Gastrocnemius medialis (tissue), 4 donors: ENCODE measurements at regions of chr7 and their contacts with region 1.

Region 1: GRCh38 chr7:137898839-137899721 is 52.3 kb upstream of the DGKI start:
- DNase-seq: peak; percentile 69 to 79
- ATAC-seq: peak; percentile 83 to 90
- H3K4me3 ChIP-seq: peak overlapping the region in 3 of 4 donors; percentile 15 to 39 (median 17)
- H3K27ac ChIP-seq: peak overlapping the region; percentile 28 to 55 (median 40)
- H3K4me1 ChIP-seq: peaks cover 19 to 23% of the 10 kb centered on the region in 2 donors
- H3K27me3 ChIP-seq: no peaks in the 10 kb centered on the region
- CTCF ChIP-seq: peak; percentile 89 to 99 (median 93)
- POLR2A ChIP-seq: no peak

Region 2: DNA sequence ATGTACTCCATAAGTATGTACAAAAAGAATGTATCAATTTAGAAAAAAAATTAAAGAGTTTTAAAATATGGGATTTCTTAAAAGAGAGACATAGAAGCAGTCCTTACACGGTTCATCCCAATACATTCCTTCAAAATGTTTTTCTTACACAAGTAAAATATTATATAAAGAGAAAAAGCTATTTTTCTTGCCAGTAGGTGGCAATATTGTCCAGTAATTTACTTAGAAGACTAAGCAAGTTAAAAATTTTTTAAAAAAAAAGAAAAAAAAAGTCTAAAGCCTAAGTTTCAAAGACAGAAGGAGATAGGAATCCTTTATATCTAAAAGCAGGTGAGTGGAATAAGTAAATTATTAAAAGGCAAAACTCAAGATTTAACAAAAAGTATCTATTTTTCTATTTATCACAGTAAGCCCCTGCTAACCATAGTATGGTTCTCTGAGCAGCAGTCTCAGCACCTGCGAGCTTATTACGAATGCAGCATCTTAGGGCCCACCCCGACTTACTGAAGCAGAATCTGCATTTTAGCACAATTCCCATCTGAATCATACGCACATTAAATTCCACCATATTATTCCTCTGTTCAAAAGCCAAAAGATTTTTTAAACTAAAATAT is 292.9 kb before region 1 on chr7:
- in situ Hi-C with region 1: no loop called
- intact Hi-C with region 1: loop called (anchors 5 kb)
- DNase-seq: no peak
- ATAC-seq: no peak
- H3K4me3 ChIP-seq: no peak overlapping the region
- H3K27ac ChIP-seq: no peak overlapping the region
- H3K4me1 ChIP-seq: no peaks in the 10 kb centered on the region
- H3K27me3 ChIP-seq: no peaks in the 10 kb centered on the region
- CTCF ChIP-seq: peak in 3 of 5 experiments; percentile 7 to 52 (median 37)
- POLR2A ChIP-seq: no peak

Region 3: DNA sequence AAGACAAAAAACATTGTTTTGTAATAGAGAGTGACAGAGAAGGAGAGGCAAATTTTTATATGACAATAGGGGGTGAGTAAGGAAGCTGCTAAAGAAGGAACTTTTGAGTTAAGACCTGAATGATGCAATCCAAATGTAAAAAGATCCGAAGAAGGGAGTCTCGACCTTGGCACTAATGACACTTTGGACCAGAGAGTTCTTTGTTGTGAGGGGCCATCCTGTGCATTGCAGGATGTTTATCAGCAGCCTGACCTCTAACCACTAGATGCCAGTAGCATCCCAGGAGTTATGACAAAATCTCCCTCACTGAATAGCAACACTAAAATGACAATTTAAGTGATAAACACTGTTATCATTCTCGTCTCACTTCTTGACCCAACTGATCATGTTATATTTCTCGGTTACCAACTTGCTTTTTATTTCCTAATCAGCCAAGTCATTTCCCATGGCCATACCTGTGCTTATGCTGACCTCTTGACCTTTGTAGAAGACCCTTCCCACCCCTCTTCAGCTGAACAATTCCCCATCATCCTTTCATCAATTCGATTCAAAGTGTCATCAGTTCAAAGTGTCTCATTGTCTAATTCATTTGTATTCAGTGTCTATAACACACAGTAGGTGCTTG is 82.3 kb before region 1 on chr7:
- in situ Hi-C with region 1: no loop called
- intact Hi-C with region 1: loop called (anchors 1 kb)
- DNase-seq: no peak
- ATAC-seq: peak in 1 of 2 donors; percentile 27
- H3K4me3 ChIP-seq: no peak overlapping the region
- H3K27ac ChIP-seq: no peak overlapping the region
- H3K4me1 ChIP-seq: no peaks in the 10 kb centered on the region
- H3K27me3 ChIP-seq: no peaks in the 10 kb centered on the region
- CTCF ChIP-seq: peak in 1 of 5 experiments; percentile 10
- POLR2A ChIP-seq: no peak

Region 4: DNA sequence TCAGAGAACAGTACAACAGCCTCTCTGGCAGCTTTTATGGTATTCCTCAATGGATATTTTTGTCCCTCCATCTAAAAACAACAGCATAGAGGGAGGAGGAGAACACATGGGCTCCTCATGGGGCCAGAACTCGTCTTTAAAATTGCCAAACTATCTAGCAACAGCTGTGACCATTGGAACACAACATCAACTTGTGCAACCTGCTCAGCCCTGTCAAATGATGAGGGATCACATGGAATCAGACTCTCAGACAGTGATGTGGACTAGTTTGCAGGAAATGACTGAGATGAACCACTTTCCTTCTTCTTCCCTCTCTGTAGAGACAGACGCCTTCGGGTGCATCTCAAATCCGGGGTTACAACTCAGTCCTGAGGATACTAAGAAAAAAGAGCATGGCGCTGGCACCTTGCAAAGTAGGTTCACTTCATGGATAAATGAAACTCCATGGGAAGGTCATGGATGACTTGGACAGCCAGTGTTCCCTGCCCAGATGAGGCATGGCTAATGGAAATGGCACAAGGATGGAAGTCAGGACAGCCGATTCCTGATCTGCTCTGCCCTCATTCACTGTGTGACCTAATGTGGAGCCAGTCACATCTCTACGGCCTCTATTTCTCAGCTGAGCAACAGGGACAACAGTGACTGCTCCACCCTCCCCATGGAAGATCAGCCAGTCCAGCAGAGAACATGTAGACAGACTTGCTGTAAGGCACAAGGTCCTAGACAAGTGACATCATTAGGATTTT is 27.7 kb before region 1 on chr7:
- in situ Hi-C with region 1: no loop called
- intact Hi-C with region 1: loop called (anchors 1 kb)
- DNase-seq: peak; percentile 79 to 87
- ATAC-seq: peak; percentile 95
- H3K4me3 ChIP-seq: peak overlapping the region in 2 of 4 donors; percentile 6 to 32
- H3K27ac ChIP-seq: peak overlapping the region; percentile 88 to 91 (median 90)
- H3K4me1 ChIP-seq: peaks cover 31 to 51% of the 10 kb centered on the region in 2 donors
- H3K27me3 ChIP-seq: no peaks in the 10 kb centered on the region
- CTCF ChIP-seq: no peak
- POLR2A ChIP-seq: peak; percentile 58 to 78

Region 5: DNA sequence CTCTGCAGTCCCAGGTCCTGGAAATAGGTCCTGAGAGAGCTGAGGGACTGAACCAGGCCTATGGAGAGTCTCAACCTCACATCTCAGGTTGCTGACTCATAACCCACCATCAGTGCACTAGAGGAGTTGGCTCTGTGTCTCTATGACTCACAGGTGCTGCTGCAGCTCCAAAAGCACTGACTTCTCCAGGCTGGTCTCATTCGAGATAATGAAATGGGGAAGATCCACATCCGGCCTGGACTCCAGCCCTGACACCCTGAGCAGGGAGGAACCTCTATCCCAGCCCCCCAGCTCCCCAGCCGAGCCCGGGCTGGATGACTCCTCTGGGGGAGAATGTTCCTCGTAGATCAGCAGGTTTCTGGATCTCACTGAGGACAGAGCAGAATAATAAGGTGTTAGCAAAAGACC is 16.8 kb before region 1 on chr7:
- in situ Hi-C with region 1: no loop called
- intact Hi-C with region 1: no loop called
- DNase-seq: peak; percentile 53 to 68
- ATAC-seq: peak; percentile 85 to 91
- H3K4me3 ChIP-seq: no peak overlapping the region
- H3K27ac ChIP-seq: peak overlapping the region; percentile 42 to 81 (median 78)
- H3K4me1 ChIP-seq: peaks cover 23 to 44% of the 10 kb centered on the region in 2 donors
- H3K27me3 ChIP-seq: no peaks in the 10 kb centered on the region
- CTCF ChIP-seq: no peak
- POLR2A ChIP-seq: peak; percentile 12 to 53

Region 6: GRCh38 chr7:137961200-137962177 is 62.4 kb after region 1 on chr7:
- in situ Hi-C with region 1: no loop called
- intact Hi-C with region 1: no loop called
- DNase-seq: no peak
- ATAC-seq: peak in 1 of 2 donors; percentile 18
- H3K4me3 ChIP-seq: no peak overlapping the region
- H3K27ac ChIP-seq: no peak overlapping the region
- H3K4me1 ChIP-seq: peaks cover under 1 to 12% of the 10 kb centered on the region in 2 donors
- H3K27me3 ChIP-seq: no peaks in the 10 kb centered on the region
- CTCF ChIP-seq: no peak
- POLR2A ChIP-seq: no peak

Region 7: GRCh38 chr7:138738551-138739335 is 839.7 kb after region 1 on chr7:
- in situ Hi-C with region 1: no loop called
- intact Hi-C with region 1: loop called (anchors 5 kb)
- DNase-seq: peak; percentile 19 to 52
- ATAC-seq: no peak
- H3K4me3 ChIP-seq: no peak overlapping the region
- H3K27ac ChIP-seq: no peak overlapping the region
- H3K4me1 ChIP-seq: no peaks in the 10 kb centered on the region
- H3K27me3 ChIP-seq: no peaks in the 10 kb centered on the region
- CTCF ChIP-seq: peak; percentile 58 to 80 (median 64)
- POLR2A ChIP-seq: no peak